AG04449 (cell line): ENCODE measurements at regions of chr16 and their contacts with region 1.

Region 1: DNA sequence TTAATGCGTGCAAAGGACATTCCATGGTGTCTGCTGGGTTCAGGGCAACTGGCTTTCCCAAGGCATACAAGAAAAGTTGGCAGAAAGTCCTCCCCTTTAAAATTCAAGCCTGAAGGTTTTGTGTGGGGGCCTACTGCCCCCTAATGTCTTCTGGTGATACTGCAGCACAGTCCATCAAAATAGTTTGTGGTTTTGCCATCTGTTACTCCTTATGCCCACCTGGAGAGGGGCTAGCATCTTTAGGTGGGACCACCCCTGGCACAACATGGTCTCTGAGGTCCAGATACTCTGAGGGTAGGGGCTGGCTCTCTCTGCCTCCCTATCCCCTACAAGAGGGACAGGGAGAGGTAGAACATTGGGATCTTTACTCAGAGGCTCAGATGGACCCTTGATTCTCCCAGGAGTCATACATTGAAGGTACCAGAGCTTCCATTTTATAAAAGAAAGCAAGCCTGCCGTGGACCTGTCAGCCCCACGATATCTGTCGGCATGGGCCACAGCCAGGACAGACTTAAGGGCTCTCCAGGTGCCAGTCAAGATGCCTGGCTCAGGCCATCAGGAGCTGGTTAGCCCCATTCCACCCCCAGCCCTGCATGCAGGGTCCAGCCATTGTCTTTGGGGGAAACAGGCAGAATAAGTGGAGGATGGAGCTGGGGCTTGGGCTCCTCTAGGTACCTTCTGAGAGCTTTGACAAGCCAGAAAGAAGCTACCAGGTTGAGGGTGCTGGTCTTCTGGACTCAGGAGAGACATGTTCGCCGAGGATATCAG is 6.3 kb downstream of the ESRP2 start:
- DNase-seq: peak; percentile 31
- H3K4me3 ChIP-seq: no peak overlapping the region
- CTCF ChIP-seq: peak; percentile 73

Region 2: DNA sequence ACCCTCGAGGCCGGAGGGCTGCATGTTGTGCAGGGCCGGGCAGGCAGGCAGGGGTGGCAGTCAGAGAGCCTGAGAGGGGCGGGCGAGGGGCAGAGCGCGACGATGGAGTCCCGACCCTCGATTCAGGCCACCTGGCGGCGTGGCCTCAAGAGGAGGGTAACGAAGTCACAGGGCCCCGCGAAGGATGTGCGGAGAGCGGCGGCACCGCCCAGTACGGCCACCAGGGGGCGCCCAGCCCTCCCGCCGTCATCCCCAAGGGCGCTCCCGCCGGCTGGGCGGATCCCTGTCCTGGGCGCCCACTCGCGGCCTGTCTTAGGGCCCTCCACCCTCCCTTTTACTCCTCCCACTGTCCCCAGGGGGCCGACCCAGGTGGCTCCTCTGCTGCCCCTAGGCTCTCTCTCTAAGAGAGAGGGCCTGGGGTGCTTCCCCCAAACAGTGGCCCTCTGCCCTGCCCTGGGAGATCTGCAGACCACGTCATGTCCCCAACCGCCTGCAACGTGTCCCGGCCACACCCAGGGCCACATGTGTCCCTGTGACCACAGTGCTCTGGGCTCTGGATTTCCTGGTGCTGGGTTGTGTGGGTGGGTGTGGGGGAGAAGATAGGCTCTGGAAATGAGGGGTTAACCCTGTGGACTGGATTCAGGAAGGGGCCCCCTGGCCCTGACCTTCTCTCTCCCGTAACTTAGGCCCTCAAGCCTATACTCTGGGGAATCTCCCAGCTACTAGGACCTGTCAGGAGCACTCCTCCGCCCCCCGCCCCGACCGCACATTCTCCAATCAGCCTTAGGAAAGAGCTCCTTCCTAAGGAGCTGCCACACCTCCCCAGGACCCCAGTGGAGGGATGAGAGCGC is 236.2 kb before region 1 on chr16:
- CTCF ChIA-PET with region 1: interaction called, 63 read pairs
- POLR2A ChIA-PET with region 1: no interaction called
- DNase-seq: no peak
- H3K4me3 ChIP-seq: peak overlapping the region; percentile 12; the same call in 1 of the 2 replicates
- CTCF ChIP-seq: peak; percentile 97

Region 3: DNA sequence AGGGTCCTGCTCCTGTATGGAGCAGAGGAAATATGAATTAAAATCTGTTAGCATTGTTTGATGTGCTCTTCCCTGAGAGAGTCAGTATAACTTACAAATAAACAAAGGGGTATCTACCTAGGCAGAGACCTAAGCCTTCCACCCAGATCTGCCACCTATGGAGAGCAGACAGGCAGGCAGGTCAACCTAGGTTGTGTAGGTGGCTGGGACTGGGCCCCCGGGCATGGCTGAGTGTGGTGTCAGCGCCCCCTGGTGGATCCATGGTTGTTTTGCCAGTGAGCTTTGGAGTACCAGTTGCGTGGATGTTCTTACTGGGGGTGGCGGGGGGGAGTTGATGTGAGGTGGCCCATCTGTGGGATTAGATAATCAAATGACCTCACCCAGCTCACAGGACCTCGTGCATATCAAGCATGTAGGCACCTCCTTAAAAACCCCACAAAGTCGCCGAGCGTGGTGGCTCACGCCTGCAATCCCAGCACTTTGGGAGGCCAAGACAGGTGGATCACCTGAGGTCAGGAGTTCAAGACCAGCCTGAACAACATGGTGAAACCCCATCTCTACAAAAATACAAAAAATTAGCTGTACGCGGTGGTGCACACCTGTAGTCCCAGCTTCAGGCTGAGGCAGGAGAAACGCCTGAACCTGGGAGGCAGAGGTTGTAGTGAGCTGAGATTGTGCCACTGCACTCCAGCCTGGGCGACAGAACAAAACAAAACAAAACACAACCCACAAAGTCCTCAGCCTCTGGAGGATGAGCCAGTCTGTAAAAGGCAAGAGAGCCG is 188.9 kb before region 1 on chr16:
- CTCF ChIA-PET with region 1: interaction called, 14 read pairs
- POLR2A ChIA-PET with region 1: no interaction called
- DNase-seq: no peak
- H3K4me3 ChIP-seq: no peak overlapping the region
- CTCF ChIP-seq: peak; percentile 90

Region 4: GRCh38 chr16:68085259-68086071 is 144.2 kb before region 1 on chr16 and contains the start of gene NFATC3:
- CTCF ChIA-PET with region 1: interaction called, 124 read pairs
- POLR2A ChIA-PET with region 1: no interaction called
- DNase-seq: peak; percentile 61
- H3K4me3 ChIP-seq: peak within 1 kb of the TSS; percentile 83
- CTCF ChIP-seq: peak; percentile 15

Region 5: DNA sequence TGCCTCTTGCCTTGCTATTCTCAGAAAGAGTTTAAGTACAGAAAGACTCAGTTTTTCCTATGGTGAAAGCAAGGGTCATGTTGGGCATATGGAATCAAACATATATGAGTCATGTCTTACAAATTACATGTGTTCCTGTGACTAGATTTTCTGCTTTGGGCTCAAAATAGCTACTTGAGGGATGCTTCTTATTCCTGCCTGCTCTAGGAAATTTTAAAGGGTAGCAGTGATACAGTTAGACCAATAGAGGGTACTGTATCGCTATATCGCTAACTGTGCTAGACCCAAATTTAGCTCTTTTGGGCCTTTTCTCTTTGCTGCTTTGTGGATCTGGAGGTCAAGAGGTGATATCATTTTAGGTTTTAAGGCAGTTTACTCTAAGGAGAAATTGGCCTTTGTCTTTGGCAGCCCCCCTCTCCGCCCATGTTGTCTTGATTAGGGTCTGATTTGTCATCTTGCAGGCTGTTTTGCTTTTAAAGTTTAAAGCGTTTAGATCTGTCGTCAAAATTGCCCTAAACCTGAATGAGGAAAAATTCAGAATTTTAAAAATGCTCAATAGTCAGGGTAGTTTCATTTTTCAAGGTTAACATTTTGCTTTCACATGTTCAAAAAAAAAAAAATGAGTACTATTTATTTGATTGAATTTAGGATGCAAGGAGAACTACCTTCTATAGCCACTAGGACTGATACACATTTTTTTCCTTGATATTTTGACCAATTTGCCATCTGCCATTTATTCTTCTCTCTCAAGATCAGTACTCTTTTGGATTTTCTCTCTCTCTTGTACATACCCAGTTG is 135.6 kb before region 1 on chr16:
- CTCF ChIA-PET with region 1: interaction called, 124 read pairs
- POLR2A ChIA-PET with region 1: no interaction called
- DNase-seq: no peak
- H3K4me3 ChIP-seq: no peak overlapping the region
- CTCF ChIP-seq: peak; percentile 46

Region 6: GRCh38 chr16:68217506-68217905 is 12.1 kb before region 1 on chr16:
- CTCF ChIA-PET with region 1: interaction called, 13 read pairs
- POLR2A ChIA-PET with region 1: no interaction called
- DNase-seq: no peak
- H3K4me3 ChIP-seq: no peak overlapping the region
- CTCF ChIP-seq: no peak

Region 7: DNA sequence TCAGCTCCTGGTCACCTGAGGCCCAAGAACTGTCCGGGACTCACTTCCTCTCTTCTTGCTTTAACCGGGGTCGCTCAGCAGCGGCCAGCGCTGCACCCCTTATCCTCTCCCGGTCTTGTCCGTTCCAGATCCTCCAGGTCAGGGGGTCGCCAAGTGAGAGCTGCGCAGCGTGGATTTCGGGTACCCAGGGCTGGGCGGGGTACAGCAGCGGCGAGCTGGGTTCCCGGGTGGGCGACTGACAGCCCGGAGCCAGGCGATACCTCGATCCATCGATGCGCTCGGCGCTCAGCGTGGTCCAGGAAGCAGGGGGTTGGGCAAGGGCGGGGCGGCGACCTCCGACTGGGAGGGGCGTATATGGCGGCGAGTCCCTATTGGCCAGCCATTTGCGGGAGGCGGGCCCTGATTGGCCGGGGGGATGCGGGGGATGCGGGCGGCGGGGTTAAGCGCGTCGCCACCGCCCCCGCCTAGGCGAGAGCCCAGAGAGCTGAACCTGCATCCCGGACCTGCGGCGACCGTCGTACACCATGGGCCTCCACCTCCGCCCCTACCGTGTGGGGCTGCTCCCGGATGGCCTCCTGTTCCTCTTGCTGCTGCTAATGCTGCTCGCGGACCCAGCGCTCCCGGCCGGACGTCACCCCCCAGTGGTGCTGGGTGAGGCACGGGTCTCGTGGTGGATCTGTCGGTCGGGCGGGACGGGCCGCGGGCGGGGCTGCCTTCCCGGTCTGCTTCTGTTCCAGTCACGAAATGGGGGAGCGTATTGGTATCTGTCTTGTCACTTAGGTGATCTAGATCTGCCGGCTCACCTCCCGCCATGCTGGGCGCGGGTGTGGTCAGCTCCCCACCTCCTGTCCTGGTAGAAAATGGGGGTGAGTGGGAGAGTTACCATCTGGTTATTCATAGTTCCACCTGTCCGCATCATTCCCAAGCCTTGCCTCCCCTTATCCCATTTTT is 15.6 kb after region 1 on chr16 and contains the start of gene PLA2G15:
- CTCF ChIA-PET with region 1: no interaction called
- POLR2A ChIA-PET with region 1: no interaction called
- DNase-seq: peak; percentile 73
- H3K4me3 ChIP-seq: peak within 1 kb of the TSS; percentile 99
- CTCF ChIP-seq: no peak

Region 8: GRCh38 chr16:68367030-68367429 is 137.4 kb after region 1 on chr16:
- CTCF ChIA-PET with region 1: no interaction called
- POLR2A ChIA-PET with region 1: no interaction called
- DNase-seq: no peak
- H3K4me3 ChIP-seq: no peak overlapping the region
- CTCF ChIP-seq: peak; percentile 20